ENCODE measurements at regions of chr20 and their contacts with region 1.

Region 1: GRCh38 chr20:62136283-62137091 is 6.7 kb downstream of the PSMA7 start:
- DNase-seq: peak in 4 of 6 donors; percentile 45 to 83 (median 68)
- ATAC-seq: peak; percentile 57 to 84 (median 76)
- H3K4me3 ChIP-seq: no peak overlapping the region
- H3K27ac ChIP-seq: no peak overlapping the region
- H3K4me1 ChIP-seq: peaks cover 6 to 15% (median 10%) of the 10 kb centered on the region in 3 donors
- H3K27me3 ChIP-seq: no peaks in the 10 kb centered on the region
- CTCF ChIP-seq: peak; percentile 38 to 64 (median 53)

Region 2: DNA sequence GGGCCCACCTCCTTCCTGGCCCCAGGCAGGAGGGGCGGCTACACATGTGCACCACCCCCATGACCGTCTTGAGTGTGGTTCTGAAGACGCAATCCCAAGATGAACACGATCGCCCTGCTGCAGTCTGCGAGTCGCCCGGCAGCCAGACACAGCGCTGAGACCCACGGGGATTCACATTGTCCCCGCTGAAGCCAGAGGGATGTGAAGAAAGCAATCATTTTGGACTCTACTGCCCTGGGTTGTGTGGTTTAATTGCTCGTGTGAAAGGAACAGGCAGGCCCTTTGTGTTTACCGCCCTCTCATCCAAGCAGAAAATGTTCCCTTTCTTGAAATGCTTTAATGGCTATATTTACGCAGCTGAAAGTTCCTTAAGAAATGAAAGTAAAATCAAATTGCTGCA is 350.3 kb before region 1 on chr20:
- intact Hi-C with region 1: no loop called
- DNase-seq: no peak
- ATAC-seq: no peak
- H3K4me3 ChIP-seq: no peak overlapping the region
- H3K27ac ChIP-seq: no peak overlapping the region
- H3K4me1 ChIP-seq: no peaks in the 10 kb centered on the region
- H3K27me3 ChIP-seq: no peaks in the 10 kb centered on the region
- CTCF ChIP-seq: no peak

Region 3: GRCh38 chr20:61803915-61804804 is 332.3 kb before region 1 on chr20:
- intact Hi-C with region 1: no loop called
- DNase-seq: peak in 1 of 6 donors; percentile 61
- ATAC-seq: peak in 1 of 4 donors; percentile 30
- H3K4me3 ChIP-seq: no peak overlapping the region
- H3K27ac ChIP-seq: no peak overlapping the region
- H3K4me1 ChIP-seq: no peaks in the 10 kb centered on the region
- H3K27me3 ChIP-seq: peaks cover 0 to 5% (median 0%) of the 10 kb centered on the region in 4 donors
- CTCF ChIP-seq: no peak

Region 4: DNA sequence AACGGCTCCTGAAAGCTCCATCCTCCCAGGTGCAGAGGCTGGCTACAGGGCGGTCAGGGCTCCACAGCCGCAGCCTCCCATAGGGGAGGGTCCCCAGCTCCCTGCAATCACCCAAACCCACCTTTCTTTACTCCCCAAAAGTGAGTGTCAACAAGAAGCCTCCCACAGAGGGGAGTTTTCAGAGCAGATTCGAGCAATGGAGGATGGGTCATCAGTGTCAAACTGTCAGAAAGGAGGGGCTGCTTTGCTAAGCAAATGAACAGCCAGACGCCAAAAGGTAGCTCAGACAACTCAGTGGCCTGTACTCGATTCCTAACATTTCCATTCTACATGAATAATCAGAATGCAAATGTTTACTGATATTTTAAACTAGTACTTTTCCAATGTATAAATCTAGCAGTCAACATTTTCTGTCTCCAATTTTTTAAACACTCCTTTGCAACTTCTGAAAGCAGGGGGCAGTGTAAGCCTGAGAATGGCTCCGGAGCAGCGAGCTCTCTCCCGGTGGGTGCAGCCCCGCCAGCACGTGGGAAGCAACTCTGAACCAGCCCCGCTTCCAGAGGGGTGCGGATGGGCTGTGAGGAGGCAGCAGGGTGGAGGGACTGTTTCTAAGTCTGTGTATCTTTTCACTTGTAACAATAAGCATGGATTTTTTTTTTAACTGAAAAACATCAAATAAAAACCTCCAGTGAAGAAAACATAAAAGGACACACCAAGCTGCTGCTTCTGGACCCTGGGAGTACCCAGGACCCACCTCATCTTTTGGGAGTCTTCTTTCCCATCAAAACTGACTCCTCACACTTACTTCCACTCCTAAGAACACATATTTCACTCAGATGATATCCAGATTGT is 125.7 kb before region 1 on chr20:
- intact Hi-C with region 1: loop called in 1 of 3 experiments (anchors 5 kb)
- DNase-seq: peak in 2 of 6 donors; percentile 34 to 42
- ATAC-seq: peak in 3 of 4 donors; percentile 75 to 80 (median 77)
- H3K4me3 ChIP-seq: no peak overlapping the region
- H3K27ac ChIP-seq: no peak overlapping the region
- H3K4me1 ChIP-seq: no peaks in the 10 kb centered on the region
- H3K27me3 ChIP-seq: no peaks in the 10 kb centered on the region
- CTCF ChIP-seq: peak in 3 of 4 donors; percentile 14 to 36 (median 18)

Region 5: GRCh38 chr20:62069741-62070216 is 66.7 kb before region 1 on chr20:
- intact Hi-C with region 1: no loop called
- DNase-seq: peak in 2 of 6 donors; percentile 28 to 60
- ATAC-seq: peak in 2 of 4 donors; percentile 4 to 15
- H3K4me3 ChIP-seq: no peak overlapping the region
- H3K27ac ChIP-seq: peak overlapping the region; percentile 8 to 32 (median 20)
- H3K4me1 ChIP-seq: peaks cover 11 to 16% (median 12%) of the 10 kb centered on the region in 3 donors
- H3K27me3 ChIP-seq: no peaks in the 10 kb centered on the region
- CTCF ChIP-seq: no peak